ENCODE measurements at regions of chr14 and their contacts with region 1.

Region 1: GRCh38 chr14:23006544-23007419 is 3.2 kb downstream of the C14orf93 start:
- DNase-seq: peak; percentile 98
- H3K4me3 ChIP-seq: peak overlapping the region; percentile 80
- H3K27ac ChIP-seq: peak overlapping the region; percentile 82
- H3K4me1 ChIP-seq: peaks cover 44% of the 10 kb centered on the region
- CTCF ChIP-seq: peak; percentile 47

Region 2: GRCh38 chr14:22872033-22872832 is 134.5 kb before region 1 on chr14:
- CTCF ChIA-PET with region 1: no interaction called
- POLR2A ChIA-PET with region 1: interaction called, 3 read pairs
- intact Hi-C with region 1: loop called (anchors 5 kb)
- DNase-seq: peak; percentile 80
- H3K4me3 ChIP-seq: peak overlapping the region; percentile 86
- H3K27ac ChIP-seq: peak overlapping the region; percentile 93
- H3K4me1 ChIP-seq: peaks cover 31% of the 10 kb centered on the region
- CTCF ChIP-seq: peak; percentile 98

Region 3: DNA sequence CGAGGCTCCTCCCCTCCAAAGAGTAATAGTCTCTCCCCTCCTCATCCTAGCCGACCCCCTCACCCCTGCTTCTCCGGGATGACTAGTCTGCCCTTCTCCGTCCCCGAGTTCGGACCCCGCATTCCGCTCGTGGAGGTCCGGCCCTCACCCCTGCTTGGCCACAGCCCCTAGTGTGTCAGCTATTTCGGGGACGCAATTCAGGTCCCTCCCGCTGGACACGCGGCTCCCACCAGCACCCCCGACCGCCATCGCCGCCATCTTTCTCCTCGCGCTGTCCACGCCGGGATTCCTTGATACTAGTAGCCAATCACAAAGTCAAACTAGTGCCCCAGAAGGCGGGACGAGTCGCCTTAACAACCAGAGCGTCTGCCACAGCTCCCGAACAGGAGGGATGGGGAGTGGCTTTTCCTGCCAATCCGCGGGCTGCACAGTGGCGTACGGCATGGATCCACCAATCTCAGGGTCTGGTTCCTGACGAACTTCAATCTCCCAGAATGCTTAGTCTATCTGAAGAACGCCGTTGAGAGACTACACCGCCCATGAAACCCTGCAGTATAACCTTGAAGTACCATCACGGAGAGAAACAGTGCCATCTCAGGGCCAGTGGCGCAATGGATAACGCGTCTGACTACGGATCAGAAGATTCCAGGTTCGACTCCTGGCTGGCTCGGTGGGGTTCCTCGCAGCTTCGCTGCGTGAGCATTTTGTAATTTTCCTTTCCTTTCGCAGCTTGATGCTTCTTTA is 77.5 kb before region 1 on chr14 and contains the start of gene PRMT5:
- CTCF ChIA-PET with region 1: no interaction called
- POLR2A ChIA-PET with region 1: interaction called, 9 read pairs
- intact Hi-C with region 1: loop called (anchors 2 kb)
- DNase-seq: peak; percentile 99
- H3K4me3 ChIP-seq: peak within 1 kb of the TSS; percentile 91
- H3K27ac ChIP-seq: peak within 1 kb of the TSS; percentile 70
- H3K4me1 ChIP-seq: peaks cover 32% of the 10 kb centered on the region
- CTCF ChIP-seq: no peak
- total RNA-seq, gene PRMT5: 82.2 and 93.1 TPM in 2 replicates

Region 4: GRCh38 chr14:22955702-22956569 is 50.8 kb before region 1 on chr14:
- CTCF ChIA-PET with region 1: no interaction called
- POLR2A ChIA-PET with region 1: interaction called, 19 read pairs
- intact Hi-C with region 1: no loop called
- DNase-seq: peak; percentile 37
- H3K4me3 ChIP-seq: peak overlapping the region; percentile 78
- H3K27ac ChIP-seq: peak overlapping the region; percentile 74
- H3K4me1 ChIP-seq: peaks cover 18% of the 10 kb centered on the region
- CTCF ChIP-seq: no peak

Region 5: GRCh38 chr14:22994762-22995275 is 12.0 kb before region 1 on chr14:
- CTCF ChIA-PET with region 1: interaction called, 16 read pairs
- POLR2A ChIA-PET with region 1: interaction called, 41 read pairs
- intact Hi-C with region 1: no loop called
- DNase-seq: peak; percentile 60
- H3K4me3 ChIP-seq: no peak overlapping the region
- H3K27ac ChIP-seq: no peak overlapping the region
- H3K4me1 ChIP-seq: peaks cover 4% of the 10 kb centered on the region
- CTCF ChIP-seq: peak; percentile 87

Region 6: DNA sequence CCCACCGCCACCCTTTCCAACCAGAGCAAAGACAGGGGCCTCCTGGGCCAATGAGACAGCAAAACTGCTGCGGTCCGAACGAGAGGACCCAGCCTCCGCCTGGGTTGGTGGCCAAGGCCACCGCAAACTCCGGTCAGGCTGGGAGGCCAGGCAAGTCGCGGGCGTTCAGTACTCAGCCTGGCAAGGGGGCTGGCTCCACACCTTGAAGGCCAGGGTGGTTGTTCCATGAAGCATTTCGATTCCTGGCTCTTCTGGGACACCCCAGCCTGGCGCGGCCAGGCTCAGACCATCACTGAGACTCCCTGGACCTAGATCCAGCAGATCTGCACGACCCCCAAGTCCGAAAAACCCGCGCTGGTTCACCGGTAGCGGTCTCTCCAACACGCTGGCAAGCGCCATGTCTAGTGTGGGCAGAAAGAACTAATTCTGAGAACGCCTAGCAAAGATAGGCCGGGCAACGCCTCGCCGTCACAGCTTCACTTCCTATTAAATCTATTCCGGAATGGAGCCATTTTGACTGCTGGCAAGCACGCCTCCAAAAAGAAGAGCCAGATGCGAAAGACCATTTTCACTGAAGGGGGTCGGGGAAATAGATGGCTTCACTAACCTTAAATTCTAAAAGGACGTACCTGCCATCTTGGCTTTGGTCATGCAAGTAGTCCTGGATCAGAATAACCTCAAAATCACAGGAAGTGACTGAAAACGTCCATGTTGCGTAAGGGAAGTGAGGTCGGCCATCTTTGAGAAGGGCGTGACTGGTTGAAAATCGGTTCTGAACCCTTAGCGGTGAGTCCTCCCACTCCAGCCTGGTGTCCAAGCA is 27.9 kb after region 1 on chr14 and contains the start of gene PSMB5:
- CTCF ChIA-PET with region 1: no interaction called
- POLR2A ChIA-PET with region 1: interaction called, 6 read pairs
- intact Hi-C with region 1: loop called (anchors 1 kb)
- DNase-seq: peak; percentile 98
- H3K4me3 ChIP-seq: peak within 1 kb of the TSS; percentile 84
- H3K27ac ChIP-seq: peak within 1 kb of the TSS; percentile 72
- H3K4me1 ChIP-seq: peaks cover 18% of the 10 kb centered on the region
- CTCF ChIP-seq: no peak
- total RNA-seq, gene PSMB5: 111 and 133 TPM in 2 replicates

Measured in OCI-LY7 (cell line).